ENCODE measurements at regions of chr1 and their contacts with region 1.

Region 1: DNA sequence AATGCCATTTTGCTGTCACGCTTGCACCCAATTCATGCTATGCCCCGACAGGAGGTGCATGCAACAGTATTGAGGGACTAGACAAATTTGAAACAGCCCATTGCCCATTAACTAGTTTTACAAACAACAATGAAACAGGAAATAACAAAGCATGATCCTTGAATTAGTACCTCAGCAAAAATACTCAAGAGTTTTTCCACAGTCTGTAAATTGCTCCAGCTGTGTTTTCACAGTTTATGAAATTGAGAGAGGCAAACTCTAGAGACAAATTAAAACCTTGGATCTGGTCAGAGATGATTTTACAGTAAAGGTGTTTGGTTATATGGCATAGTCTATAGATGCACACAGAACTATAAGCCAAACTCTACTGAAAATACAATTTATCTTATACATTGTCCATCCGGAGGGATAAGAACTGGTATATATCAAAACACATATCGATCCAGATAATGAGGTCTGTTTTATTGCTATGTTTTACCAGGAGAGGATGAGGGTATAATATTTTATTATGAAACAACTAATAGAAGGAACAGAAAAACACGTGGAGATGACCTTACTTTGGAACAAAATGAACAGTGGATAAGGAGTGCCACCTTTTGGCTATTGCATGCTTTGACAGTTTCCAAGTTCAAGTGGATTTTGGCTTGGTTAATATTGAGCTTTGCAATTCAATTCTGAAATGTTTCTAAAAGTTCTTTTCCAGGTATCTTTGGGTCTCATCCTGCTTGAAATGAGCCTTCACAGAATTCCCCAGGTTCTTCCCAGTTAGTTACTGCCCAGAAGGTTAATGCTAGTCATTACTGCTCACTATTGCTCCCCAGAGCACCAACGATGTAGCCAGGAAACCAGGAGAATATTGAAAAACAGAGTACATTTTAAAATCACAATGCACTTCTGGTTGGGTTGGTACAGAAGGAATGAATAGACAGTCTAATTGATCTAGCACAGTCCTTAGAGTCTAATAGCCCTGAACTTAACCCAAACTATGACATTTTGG is 45.7 kb downstream of the ZC3H11B start:
- DNase-seq: peak; percentile 37
- CTCF ChIP-seq: peak; percentile 32

Region 2: GRCh38 chr1:218323568-218324225 is 1243.6 kb before region 1 on chr1:
- in situ Hi-C with region 1: loop called (anchors 10 kb)
- DNase-seq: no peak
- CTCF ChIP-seq: no peak

Region 3: DNA sequence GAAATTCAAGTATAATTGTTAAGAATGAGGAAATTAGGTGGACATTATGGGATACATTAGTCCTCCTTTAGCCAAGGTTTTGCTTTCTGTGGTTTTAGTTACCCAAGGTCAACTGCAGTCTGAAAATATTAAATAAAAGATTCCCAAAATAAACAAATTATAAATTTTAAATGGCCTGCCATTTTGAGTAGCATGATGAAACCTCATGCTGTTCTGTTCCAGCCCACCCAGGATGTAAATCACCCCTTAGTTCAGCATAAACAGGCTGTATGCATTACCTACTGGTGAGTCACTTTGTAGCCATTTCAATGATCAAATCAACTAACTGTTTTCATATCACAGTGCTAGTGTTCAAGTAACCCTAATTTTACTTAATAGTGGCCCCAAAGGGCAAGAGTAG is 526.1 kb before region 1 on chr1:
- in situ Hi-C with region 1: no loop called
- DNase-seq: no peak
- CTCF ChIP-seq: no peak

Region 4: GRCh38 chr1:219215477-219215876 is 351.8 kb before region 1 on chr1:
- in situ Hi-C with region 1: loop called (anchors 10 kb)
- DNase-seq: no peak
- CTCF ChIP-seq: no peak

Region 5: GRCh38 chr1:219373616-219373935 is 193.7 kb before region 1 on chr1:
- in situ Hi-C with region 1: no loop called
- DNase-seq: no peak
- CTCF ChIP-seq: no peak

Region 6: GRCh38 chr1:219385786-219386427 is 181.3 kb before region 1 on chr1:
- in situ Hi-C with region 1: no loop called
- DNase-seq: peak; percentile 41
- CTCF ChIP-seq: peak; percentile 64

Region 7: DNA sequence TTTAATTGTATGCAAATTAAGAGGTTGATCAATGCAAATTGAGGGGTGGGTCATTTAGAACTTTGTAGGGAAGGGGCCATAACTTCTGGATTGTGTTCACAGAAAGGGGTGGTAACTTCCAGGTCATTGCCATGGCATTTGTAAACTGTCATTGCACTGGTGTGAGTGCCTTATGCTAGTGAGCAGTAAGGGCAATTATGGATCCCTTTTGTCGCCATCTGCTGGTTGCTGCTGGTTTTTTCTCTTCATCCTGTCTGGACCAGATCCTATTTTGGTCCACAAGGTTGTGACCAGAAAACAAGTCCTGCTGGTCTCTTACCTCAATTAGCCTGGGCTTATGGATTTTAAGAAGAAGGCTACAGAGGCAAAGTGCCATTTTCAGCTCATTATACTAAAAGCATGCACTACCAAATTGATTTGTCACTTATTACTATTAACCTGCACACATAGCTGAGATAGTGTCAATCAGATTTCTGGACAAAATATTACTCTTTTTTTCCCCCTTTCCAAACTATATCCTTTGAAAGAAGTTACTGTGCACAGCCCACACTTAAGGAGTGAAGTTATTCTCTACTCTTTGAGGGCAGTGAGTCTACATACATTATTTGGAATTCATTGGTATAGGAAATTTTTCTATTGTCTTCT is 150.5 kb before region 1 on chr1:
- in situ Hi-C with region 1: no loop called
- DNase-seq: no peak
- CTCF ChIP-seq: peak; percentile 32

Region 8: GRCh38 chr1:219812491-219813203 is 245.4 kb after region 1 on chr1:
- in situ Hi-C with region 1: loop called (anchors 25 kb)
- DNase-seq: peak; percentile 63
- CTCF ChIP-seq: peak; percentile 67